ENCODE measurements at regions of chr17 and their contacts with region 1.

Region 1: GRCh38 chr17:59734226-59734625 is 26.8 kb downstream of the VMP1 start:
- DNase-seq: no peak
- H3K4me3 ChIP-seq: no peak overlapping the region
- H3K27me3 ChIP-seq: no peaks in the 10 kb centered on the region
- CTCF ChIP-seq: no peak

Region 2: GRCh38 chr17:59746849-59747445 is 12.7 kb after region 1 on chr17:
- CTCF ChIA-PET with region 1: interaction called, 12 read pairs
- POLR2A ChIA-PET with region 1: no interaction called
- DNase-seq: no peak
- H3K4me3 ChIP-seq: no peak overlapping the region
- H3K27me3 ChIP-seq: no peaks in the 10 kb centered on the region
- CTCF ChIP-seq: peak; percentile 62